A549 (cell line): ENCODE measurements at regions of chr7 and their contacts with region 1.

Region 1: GRCh38 chr7:101099969-101100781 is 14.9 kb downstream of the TRIM56 start:
- DNase-seq: peak; percentile 91 to 98
- ATAC-seq: peak; percentile 90 to 96
- H3K4me3 ChIP-seq: no peak overlapping the region; the same call in 2 of the 3 replicates
- H3K27ac ChIP-seq: peak overlapping the region; percentile 94 to 99
- H3K4me1 ChIP-seq: peaks cover 69% of the 10 kb centered on the region
- CTCF ChIP-seq: no peak
- EP300 ChIP-seq: peak; percentile 90 to 94
- POLR2A ChIP-seq: peak; percentile 22; the same call in 1 of the 2 replicates
- RAD21 ChIP-seq: peak; percentile 38 to 49

Region 2: DNA sequence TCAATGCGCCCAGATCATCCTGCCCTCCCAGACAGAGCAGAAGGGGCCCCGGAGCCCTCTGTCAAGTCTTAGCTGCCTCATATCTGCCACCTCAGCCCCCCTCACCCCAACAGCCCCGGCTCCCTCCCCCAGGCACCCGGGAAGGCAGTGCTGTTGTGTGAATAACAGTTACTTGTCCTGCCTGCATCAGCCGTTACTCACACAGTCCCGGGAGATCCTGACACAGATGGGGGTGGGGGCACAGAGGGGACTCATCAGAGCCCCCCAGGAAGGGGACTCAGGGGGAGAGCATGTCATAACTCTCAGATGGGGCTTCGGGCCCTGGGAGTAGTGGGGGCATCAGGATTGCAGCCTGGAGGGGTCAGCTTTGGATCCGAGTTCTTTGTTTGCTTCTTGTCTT is 14.3 kb after region 1 on chr7:
- CTCF ChIA-PET with region 1: interaction called, 600 read pairs
- POLR2A ChIA-PET with region 1: interaction called, 41 read pairs
- DNase-seq: no peak
- ATAC-seq: no peak; a peak in 1 of 6 replicates
- H3K4me3 ChIP-seq: no peak overlapping the region
- H3K27ac ChIP-seq: peak overlapping the region; percentile 94 to 95
- H3K4me1 ChIP-seq: peaks cover 52% of the 10 kb centered on the region
- CTCF ChIP-seq: no peak
- EP300 ChIP-seq: no peak
- POLR2A ChIP-seq: no peak
- RAD21 ChIP-seq: no peak

Region 3: DNA sequence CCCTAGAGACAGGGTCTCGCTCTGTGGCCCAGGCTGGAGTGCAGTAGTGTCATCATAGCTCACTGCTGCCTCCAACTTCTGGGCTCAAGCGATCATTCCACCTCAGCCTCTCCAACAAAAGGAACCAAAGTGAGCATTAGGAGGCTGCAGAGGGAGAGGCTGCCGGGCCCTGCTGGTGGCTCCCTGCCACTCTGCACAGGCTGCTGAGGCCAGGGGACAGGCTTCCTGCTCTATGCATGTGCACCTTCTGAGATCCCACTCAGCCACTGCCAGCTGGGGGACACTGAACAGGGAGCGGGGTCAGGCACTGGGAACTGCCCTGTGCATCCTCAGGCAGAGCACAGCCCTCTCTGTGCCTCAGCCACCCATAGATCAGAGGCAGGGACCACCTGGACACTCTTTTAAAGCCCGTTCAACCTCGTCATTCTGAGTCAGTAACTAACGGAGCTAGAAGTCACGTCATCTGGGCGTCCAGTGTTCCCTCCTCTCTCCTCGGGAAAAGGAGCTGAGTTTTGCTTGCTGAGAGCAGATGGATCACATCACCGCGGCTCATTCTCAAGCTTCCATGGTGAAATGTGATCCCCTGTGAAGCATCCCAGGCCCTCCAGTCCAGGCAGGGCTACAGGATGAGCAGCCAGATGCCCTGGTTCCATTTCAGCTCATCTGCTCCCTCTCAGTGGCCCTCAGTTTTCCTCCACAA is 419.3 kb after region 1 on chr7:
- CTCF ChIA-PET with region 1: no interaction called
- POLR2A ChIA-PET with region 1: no interaction called
- DNase-seq: no peak
- ATAC-seq: peak in 1 of 2 experiments; percentile 56; a peak in 4 of 6 replicates
- H3K4me3 ChIP-seq: no peak overlapping the region
- H3K27ac ChIP-seq: no peak overlapping the region
- H3K4me1 ChIP-seq: no peaks in the 10 kb centered on the region
- CTCF ChIP-seq: no peak
- EP300 ChIP-seq: no peak
- POLR2A ChIP-seq: no peak
- RAD21 ChIP-seq: no peak